Activated CD4-positive, alpha-beta T cell treated with anti-CD3 and anti-CD28 coated beads, Interleukin-2, amount 10 ng/mL, durations not matched to agents 24 days and 14 days (primary cell): ENCODE measurements at regions of chr6 and their contacts with region 1.

Region 1: DNA sequence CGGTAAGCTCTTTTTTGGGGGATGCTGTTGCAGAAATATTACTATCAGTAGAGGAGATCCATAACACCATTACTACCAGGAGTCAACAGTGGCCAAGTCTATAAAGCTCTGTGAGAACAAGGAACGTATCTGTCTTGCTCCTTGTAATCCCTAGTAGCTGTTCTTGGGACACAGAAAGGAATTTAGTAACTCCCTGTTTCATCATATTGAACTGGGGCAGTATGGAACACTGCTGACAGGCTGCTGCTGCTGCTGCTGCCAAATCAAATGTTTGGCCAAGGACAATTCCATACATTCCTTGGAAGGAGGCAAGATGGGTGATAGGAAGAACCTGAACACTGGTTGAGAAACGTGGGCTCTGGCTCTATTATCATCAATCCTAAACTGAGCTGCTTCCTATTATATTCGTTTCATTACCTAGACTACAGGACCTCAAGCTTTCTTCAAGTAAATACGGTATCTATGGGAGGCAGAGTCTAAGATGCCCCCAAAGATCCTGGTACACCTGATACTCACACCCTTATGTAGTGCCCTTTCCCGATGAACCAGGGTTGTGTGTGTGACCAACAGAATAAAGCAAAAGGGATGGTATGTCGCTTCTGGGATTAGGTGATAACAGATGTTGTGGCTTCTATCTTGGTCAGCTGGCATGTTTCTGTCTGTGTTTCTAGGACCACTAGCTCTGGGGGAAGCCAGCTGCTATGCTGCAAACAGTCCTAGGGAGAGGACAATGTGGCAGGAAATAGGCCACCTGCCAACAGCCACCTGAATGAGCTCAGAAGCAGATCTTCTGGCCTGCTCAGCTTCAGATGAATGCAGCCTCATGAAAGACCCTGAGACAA is 39.5 kb downstream of the ELOVL5 start:
- DNase-seq: no peak
- H3K4me3 Mint-ChIP-seq: no peak overlapping the region
- H3K27ac Mint-ChIP-seq: peak overlapping the region; percentile 32
- H3K4me1 Mint-ChIP-seq: peaks cover 63% of the 10 kb centered on the region
- H3K27me3 Mint-ChIP-seq: no peaks in the 10 kb centered on the region

Region 2: GRCh38 chr6:53322188-53323029 is 13.1 kb after region 1 on chr6:
- intact Hi-C with region 1: loop called (anchors 2 kb)
- DNase-seq: no peak
- H3K4me3 Mint-ChIP-seq: no peak overlapping the region
- H3K27ac Mint-ChIP-seq: peak overlapping the region; percentile 5
- H3K4me1 Mint-ChIP-seq: peaks cover 48% of the 10 kb centered on the region
- H3K27me3 Mint-ChIP-seq: no peaks in the 10 kb centered on the region

Region 3: DNA sequence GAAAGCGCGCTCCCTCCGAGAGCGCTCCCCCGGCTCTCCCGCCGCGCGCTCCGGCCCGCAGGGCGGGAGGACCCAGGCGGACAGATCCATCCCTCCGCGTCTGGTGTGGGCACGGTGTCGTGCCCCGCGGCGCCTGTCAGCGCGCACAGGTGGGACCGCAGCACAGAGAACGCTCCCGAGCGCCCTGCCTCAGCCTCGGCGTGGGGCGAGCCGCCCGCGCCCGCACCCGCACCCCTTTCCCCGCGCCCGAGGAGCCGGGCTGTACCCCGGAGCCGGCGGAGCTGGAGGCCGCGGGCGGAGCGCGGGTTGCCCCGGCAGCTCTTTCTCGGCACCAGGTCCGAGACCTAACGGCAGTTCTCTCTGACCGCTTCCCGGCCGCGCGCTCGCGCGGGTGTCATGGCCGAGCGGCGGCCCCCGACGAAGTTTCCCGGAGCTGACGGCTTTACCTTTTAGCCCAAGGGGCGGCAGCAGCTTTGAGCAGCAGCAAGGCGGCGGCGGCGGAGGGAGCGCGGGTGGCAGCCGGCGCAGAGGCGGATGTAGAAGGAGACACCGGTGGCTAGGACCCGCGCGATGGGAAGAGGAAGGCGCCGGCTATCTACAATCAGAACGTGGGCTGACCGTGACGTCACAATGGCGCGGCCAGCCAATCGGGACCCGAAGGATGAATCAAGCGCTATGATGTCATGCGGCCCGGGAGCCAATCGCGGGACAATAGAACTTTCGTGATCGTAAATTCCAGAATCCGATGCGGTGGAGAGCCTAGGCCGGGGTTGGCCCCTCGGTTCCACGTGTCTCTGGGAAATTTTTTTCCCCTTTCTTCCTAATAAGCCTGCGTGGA is 39.3 kb after region 1 on chr6 and contains the start of gene ELOVL5:
- intact Hi-C with region 1: loop called (anchors 1 kb)
- DNase-seq: peak; percentile 99
- H3K4me3 Mint-ChIP-seq: peak within 1 kb of the TSS; percentile 93
- H3K27ac Mint-ChIP-seq: peak within 1 kb of the TSS; percentile 92
- H3K4me1 Mint-ChIP-seq: peaks cover 40% of the 10 kb centered on the region
- H3K27me3 Mint-ChIP-seq: peaks cover 19% of the 10 kb centered on the region
- total RNA-seq, gene ELOVL5: 122 and 126 TPM in 2 replicates

Region 4: GRCh38 chr6:53426667-53427270 is 117.5 kb after region 1 on chr6:
- intact Hi-C with region 1: loop called (anchors 1 kb)
- DNase-seq: no peak
- H3K4me3 Mint-ChIP-seq: no peak overlapping the region
- H3K27ac Mint-ChIP-seq: no peak overlapping the region
- H3K4me1 Mint-ChIP-seq: peaks cover 19% of the 10 kb centered on the region
- H3K27me3 Mint-ChIP-seq: peaks cover 14% of the 10 kb centered on the region